ENCODE measurements at regions of chr12 and their contacts with region 1.

Region 1: GRCh38 chr12:30847259-30847658 is 79.3 kb upstream of the TSPAN11 start:
- DNase-seq: no peak
- H3K4me3 ChIP-seq: no peak overlapping the region
- H3K27me3 ChIP-seq: no peaks in the 10 kb centered on the region
- CTCF ChIP-seq: peak; percentile 65

Region 2: GRCh38 chr12:30874455-30875321 is 27.4 kb after region 1 on chr12:
- CTCF ChIA-PET with region 1: interaction called, 10 read pairs
- POLR2A ChIA-PET with region 1: no interaction called
- DNase-seq: no peak
- H3K4me3 ChIP-seq: no peak overlapping the region
- H3K27me3 ChIP-seq: peaks cover 2% of the 10 kb centered on the region; the same call in 1 of the 2 replicates
- CTCF ChIP-seq: no peak

Region 3: GRCh38 chr12:30985814-30986452 is 138.7 kb after region 1 on chr12:
- CTCF ChIA-PET with region 1: interaction called, 324 read pairs
- POLR2A ChIA-PET with region 1: no interaction called
- DNase-seq: no peak
- H3K4me3 ChIP-seq: no peak overlapping the region
- H3K27me3 ChIP-seq: 0 out of 2 replicates have a peak, but pooled peaks cover 1% of the 10 kb centered on the region
- CTCF ChIP-seq: peak; percentile 92

Region 4: DNA sequence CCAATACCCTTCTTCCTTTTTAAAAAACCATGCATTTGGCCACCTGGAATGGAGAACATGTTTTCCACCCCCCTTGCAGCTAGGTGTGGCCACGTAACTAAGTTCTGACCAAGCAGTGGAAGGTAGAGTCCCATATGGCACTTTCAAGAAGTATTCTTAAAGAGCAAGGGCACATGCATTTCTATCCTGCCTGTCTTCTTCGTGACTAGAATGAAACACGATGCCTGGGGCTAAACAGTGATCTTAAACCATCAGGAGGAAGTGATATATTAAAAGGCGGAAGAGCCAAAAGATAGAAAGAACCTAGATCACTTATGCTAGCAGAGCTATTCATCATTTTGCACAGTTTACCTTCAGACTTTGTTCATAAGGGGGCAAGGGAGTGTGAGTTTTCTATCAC is 210.4 kb after region 1 on chr12:
- CTCF ChIA-PET with region 1: interaction called, 11 read pairs
- POLR2A ChIA-PET with region 1: no interaction called
- DNase-seq: no peak
- H3K4me3 ChIP-seq: no peak overlapping the region
- H3K27me3 ChIP-seq: no peaks in the 10 kb centered on the region
- CTCF ChIP-seq: no peak

Region 5: DNA sequence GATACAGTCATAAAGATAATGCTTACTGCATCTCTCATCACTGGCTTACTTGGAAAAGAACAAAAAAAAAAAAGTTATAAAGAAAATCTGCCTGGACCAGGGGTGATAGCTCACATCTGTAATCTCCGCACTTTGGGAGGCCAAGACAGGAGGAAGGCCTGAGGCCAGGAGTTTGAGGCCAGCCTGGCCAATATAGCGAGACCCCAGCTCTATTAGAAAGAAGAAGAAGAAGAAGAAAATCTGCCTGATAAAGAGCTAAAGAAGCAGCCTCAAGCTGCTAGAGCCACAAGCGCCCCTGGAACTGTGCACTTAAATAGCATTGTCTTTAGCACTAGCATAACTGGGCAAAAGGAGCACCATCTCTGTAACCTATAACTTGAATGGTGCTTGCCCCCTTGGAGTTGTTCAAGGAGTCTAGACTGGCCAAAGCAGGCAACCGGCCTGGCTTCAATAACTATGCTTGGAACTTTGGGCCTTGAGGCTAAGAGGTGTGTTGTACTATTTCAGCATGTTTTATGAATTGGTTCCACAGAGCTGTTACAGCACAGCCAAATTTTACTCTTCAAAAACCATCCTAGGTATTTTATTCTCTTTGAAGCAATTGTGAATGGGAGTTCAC is 425.5 kb after region 1 on chr12:
- CTCF ChIA-PET with region 1: interaction called, 25 read pairs
- POLR2A ChIA-PET with region 1: no interaction called
- DNase-seq: no peak
- H3K4me3 ChIP-seq: no peak overlapping the region
- H3K27me3 ChIP-seq: no peaks in the 10 kb centered on the region
- CTCF ChIP-seq: no peak